ENCODE measurements at regions of chr7 and their contacts with region 1.

Region 1: GRCh38 chr7:93178212-93178611 is 30.0 kb upstream of the SAMD9L start:
- DNase-seq: peak in 1 of 2 experiments; percentile 27
- H3K4me3 ChIP-seq: no peak overlapping the region
- H3K4me3 Mint-ChIP-seq: no peak overlapping the region
- H3K27ac Mint-ChIP-seq: no peak overlapping the region
- H3K4me1 ChIP-seq: no peaks in the 10 kb centered on the region
- H3K4me1 Mint-ChIP-seq: no peaks in the 10 kb centered on the region
- H3K27me3 ChIP-seq: no peaks in the 10 kb centered on the region
- H3K27me3 Mint-ChIP-seq: peaks cover 7% of the 10 kb centered on the region
- CTCF ChIP-seq: peak; percentile 38 to 60

Region 2: GRCh38 chr7:93092757-93093370 is 85.3 kb before region 1 on chr7:
- CTCF ChIA-PET with region 1: no interaction called
- POLR2A ChIA-PET with region 1: no interaction called
- intact Hi-C with region 1: loop called (anchors 2 kb)
- DNase-seq: peak in 1 of 2 experiments; percentile 27
- H3K4me3 ChIP-seq: no peak overlapping the region
- H3K4me3 Mint-ChIP-seq: no peak overlapping the region
- H3K27ac Mint-ChIP-seq: no peak overlapping the region
- H3K4me1 ChIP-seq: peaks cover 6% of the 10 kb centered on the region; the same call in 1 of the 2 replicates
- H3K4me1 Mint-ChIP-seq: peaks cover 4% of the 10 kb centered on the region
- H3K27me3 ChIP-seq: no peaks in the 10 kb centered on the region
- H3K27me3 Mint-ChIP-seq: peaks cover 16% of the 10 kb centered on the region
- CTCF ChIP-seq: peak; percentile 27 to 38

Region 3: GRCh38 chr7:93203487-93203886 is 25.3 kb after region 1 on chr7:
- CTCF ChIA-PET with region 1: no interaction called
- POLR2A ChIA-PET with region 1: no interaction called
- intact Hi-C with region 1: loop called (anchors 2 kb)
- DNase-seq: peak; percentile 35 to 47
- H3K4me3 ChIP-seq: no peak overlapping the region
- H3K4me3 Mint-ChIP-seq: no peak overlapping the region
- H3K27ac Mint-ChIP-seq: peak overlapping the region; percentile 40
- H3K4me1 ChIP-seq: peaks cover 44% of the 10 kb centered on the region
- H3K4me1 Mint-ChIP-seq: peaks cover 22% of the 10 kb centered on the region
- H3K27me3 ChIP-seq: no peaks in the 10 kb centered on the region
- H3K27me3 Mint-ChIP-seq: no peaks in the 10 kb centered on the region
- CTCF ChIP-seq: no peak

Region 4: DNA sequence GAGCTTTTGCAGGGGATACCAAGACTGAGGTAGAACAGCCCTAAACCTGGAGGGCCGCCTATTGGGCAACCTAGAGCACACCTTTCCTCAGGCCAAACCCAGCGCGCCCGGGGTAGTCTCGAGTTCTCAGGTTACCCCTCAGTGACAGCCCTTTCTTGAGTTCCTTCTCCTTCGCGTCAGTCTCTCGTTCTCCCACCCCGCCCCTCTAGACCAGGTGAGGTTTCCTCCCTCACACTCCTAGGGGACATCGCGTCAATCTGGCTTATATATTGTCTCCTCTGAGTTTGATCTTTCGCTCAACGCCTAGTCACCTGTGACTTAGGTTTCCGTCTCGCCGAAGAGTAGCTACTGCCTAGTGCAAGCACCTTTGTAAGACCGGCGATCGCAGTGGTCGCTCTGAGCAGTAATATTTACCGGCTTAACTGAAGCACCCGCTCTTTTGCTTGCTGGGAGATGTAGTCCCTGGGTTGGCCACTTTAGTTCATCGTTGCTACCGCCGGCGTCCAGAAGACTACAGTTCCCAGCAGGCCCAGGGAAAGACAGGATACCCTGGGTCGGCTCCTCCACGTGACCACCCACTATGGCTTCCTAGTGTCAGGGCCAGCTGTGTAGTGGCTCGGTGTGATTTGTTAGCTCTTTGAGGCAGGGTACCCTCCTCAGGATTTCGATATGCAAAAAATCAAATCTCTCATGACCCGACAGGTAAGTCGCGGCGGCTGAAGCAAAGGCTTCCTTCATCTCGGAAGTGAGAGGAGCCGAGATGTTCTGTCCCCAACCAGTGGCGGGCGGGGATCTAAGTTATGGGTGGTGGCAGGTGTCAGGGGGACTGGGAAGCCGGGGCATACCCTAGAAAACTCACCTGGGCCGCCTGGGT is 53.8 kb after region 1 on chr7 and contains the start of gene VPS50:
- CTCF ChIA-PET with region 1: interaction called, 12 read pairs
- POLR2A ChIA-PET with region 1: no interaction called
- intact Hi-C with region 1: loop called (anchors 1 kb)
- DNase-seq: peak; percentile 96 to 97
- H3K4me3 ChIP-seq: peak within 1 kb of the TSS; percentile 51
- H3K4me3 Mint-ChIP-seq: peak within 1 kb of the TSS; percentile 96
- H3K27ac Mint-ChIP-seq: peak within 1 kb of the TSS; percentile 97
- H3K4me1 ChIP-seq: peaks cover 15% of the 10 kb centered on the region; the same call in 1 of the 2 replicates
- H3K4me1 Mint-ChIP-seq: no peaks in the 10 kb centered on the region
- H3K27me3 ChIP-seq: no peaks in the 10 kb centered on the region
- H3K27me3 Mint-ChIP-seq: no peaks in the 10 kb centered on the region
- CTCF ChIP-seq: peak in 1 of 2 experiments; percentile 32
- total RNA-seq, gene VPS50: 38.7 and 40.3 TPM in 2 replicates

Region 5: DNA sequence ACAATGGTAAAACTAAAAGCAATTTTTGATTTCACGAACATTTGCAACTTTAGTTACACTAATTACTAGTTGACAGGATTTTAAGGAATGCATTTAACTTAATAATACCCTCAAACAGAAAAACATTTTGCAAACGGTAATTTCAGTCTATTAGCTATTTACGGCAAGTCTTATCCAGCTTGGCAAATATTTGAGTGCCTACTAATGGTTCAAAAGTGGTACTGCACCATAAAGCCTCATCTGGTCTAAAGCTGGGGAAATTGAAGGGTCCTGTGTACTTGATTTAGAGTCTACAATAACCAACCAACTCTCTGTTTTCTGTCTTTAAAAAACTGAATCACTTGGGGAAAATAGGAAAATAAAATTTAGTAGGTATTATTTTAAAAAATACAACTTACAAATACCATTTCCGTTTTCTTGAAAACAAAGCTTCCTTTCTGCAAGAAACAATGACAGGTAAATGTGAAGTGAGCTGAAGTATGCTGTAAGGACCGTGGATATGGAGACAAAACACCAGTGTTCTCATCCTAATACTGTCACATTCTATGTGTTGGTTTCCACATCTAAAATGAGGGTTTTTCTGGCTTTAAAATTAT is 196.2 kb after region 1 on chr7:
- CTCF ChIA-PET with region 1: no interaction called
- POLR2A ChIA-PET with region 1: no interaction called
- intact Hi-C with region 1: loop called (anchors 5 kb)
- DNase-seq: peak in 1 of 2 experiments; percentile 32
- H3K4me3 ChIP-seq: no peak overlapping the region
- H3K4me3 Mint-ChIP-seq: no peak overlapping the region
- H3K27ac Mint-ChIP-seq: no peak overlapping the region
- H3K4me1 ChIP-seq: no peaks in the 10 kb centered on the region; the same call in 1 of the 2 replicates
- H3K4me1 Mint-ChIP-seq: no peaks in the 10 kb centered on the region
- H3K27me3 ChIP-seq: no peaks in the 10 kb centered on the region
- H3K27me3 Mint-ChIP-seq: peaks cover 2% of the 10 kb centered on the region
- CTCF ChIP-seq: peak; percentile 79 to 82

Region 6: GRCh38 chr7:93551063-93551904 is 373.1 kb after region 1 on chr7:
- CTCF ChIA-PET with region 1: no interaction called
- POLR2A ChIA-PET with region 1: no interaction called
- intact Hi-C with region 1: loop called (anchors 1 kb)
- DNase-seq: peak in 1 of 2 experiments; percentile 36
- H3K4me3 ChIP-seq: no peak overlapping the region
- H3K4me3 Mint-ChIP-seq: no peak overlapping the region
- H3K27ac Mint-ChIP-seq: no peak overlapping the region
- H3K4me1 ChIP-seq: no peaks in the 10 kb centered on the region
- H3K4me1 Mint-ChIP-seq: no peaks in the 10 kb centered on the region
- H3K27me3 ChIP-seq: no peaks in the 10 kb centered on the region
- H3K27me3 Mint-ChIP-seq: peaks cover 8% of the 10 kb centered on the region
- CTCF ChIP-seq: peak; percentile 45 to 70